ENCODE measurements at regions of chr1 and their contacts with region 1.

Region 1: DNA sequence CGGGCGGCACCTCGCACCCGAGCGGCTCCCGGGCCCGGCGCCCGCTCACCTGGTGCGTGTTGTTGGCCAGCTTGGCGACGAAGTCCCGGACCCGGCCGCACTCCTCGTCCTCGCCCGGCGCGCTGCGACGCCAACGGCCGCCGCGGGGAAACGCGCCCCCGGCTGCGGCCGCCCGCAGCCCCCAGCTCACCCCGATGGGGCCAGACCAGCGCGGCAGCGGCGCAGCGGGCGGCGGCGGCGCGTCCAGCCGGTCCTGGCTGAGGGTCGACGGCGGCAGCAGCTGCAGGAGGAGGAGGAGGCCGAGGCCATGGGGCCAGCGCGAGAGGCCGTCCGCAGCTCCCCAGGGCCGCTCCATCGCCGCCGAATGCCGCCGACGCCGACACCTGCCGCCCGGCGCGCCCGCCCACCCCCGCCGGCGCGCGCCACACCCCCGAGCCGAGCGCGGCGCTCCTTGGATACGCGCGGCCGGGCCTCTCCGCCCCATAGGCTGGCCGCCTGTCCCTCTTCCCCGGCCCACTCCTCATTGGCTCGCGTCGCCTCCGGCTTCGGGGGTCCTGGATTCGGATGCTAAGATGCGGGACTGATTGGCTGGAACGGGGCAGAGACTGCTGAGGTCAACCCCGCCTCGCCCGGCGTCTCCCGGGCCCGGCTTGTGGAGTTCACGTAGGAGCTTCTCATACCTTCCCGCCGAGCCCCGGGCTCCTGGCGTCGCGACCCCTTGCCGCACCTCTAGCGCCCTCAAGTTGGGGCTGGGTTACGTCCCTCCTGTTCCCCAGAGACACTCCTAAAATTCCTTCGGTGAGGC is at the start of gene SORT1:
- DNase-seq: peak; percentile 88 to 90
- ATAC-seq: peak; percentile 93 to 96 (median 94)
- H3K4me3 ChIP-seq: peak within 1 kb of the TSS; percentile 29 to 80 (median 64)
- H3K27ac ChIP-seq: peak within 1 kb of the TSS; percentile 53 to 96 (median 89)
- H3K4me1 ChIP-seq: peaks cover 7 to 73% (median 54%) of the 10 kb centered on the region in 9 donors
- H3K27me3 ChIP-seq: peaks cover 0 to 11% (median 0%) of the 10 kb centered on the region in 7 donors
- CTCF ChIP-seq: peak in 1 of 9 donors; percentile 18
- total RNA-seq, gene SORT1: 105 to 235 (median 132) TPM

Region 2: GRCh38 chr1:109099938-109100773 is 297.6 kb before region 1 on chr1:
- intact Hi-C with region 1: loop called in 1 of 10 experiments (anchors 10 kb)
- DNase-seq: peak; percentile 96 to 98
- ATAC-seq: peak; percentile 97 to 99 (median 99)
- H3K4me3 ChIP-seq: peak overlapping the region; percentile 81 to 100 (median 96)
- H3K27ac ChIP-seq: peak overlapping the region; percentile 94 to 100 (median 98)
- H3K4me1 ChIP-seq: peaks cover 0 to 38% (median 22%) of the 10 kb centered on the region in 9 donors
- H3K27me3 ChIP-seq: no peaks in the 10 kb centered on the region
- CTCF ChIP-seq: peak; percentile 76 to 96 (median 90)

Region 3: DNA sequence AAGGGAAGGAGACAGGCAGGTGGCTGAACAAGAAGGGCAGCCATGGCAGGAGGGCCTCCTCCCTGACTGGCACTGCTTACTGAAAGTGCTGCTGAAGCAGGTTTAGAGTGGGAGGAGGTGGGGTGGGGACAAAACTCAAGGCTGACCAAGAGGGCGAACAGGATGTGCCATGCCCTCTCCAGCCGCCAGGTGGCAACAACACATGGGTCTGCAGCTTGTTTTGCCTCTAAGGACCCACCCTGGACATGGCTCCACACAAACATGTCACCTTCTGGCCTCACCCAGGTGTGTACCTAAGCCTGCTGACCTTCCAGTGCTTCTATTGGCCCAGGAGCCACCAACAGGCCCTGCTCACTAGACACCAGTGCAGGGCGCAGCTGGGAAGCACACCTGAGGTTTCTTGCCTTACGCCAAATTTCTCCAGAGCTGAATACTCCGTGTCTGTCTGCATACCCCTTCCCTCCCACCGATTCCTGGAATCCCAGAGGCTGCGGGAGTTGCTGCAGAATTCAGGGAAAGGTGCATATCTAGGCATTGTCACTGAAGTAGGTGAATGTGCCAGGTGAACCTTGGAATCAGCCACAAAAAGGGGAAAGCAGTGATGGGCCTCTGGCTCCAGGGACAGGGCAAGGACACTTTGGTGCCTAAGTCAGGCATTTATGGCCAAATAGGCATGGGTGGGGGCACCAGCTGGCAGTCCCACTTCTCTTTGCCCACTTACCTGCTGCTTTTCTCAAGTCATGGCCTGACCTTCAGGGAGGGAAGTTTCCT is 120.1 kb before region 1 on chr1:
- intact Hi-C with region 1: loop called (anchors 1 to 5 kb)
- DNase-seq: peak; percentile 78 to 81
- ATAC-seq: peak; percentile 65 to 84 (median 78)
- H3K4me3 ChIP-seq: no peak overlapping the region
- H3K27ac ChIP-seq: no peak overlapping the region
- H3K4me1 ChIP-seq: peaks cover 0 to 29% (median 7%) of the 10 kb centered on the region in 9 donors
- H3K27me3 ChIP-seq: no peaks in the 10 kb centered on the region
- CTCF ChIP-seq: peak; percentile 86 to 96 (median 89)

Region 4: DNA sequence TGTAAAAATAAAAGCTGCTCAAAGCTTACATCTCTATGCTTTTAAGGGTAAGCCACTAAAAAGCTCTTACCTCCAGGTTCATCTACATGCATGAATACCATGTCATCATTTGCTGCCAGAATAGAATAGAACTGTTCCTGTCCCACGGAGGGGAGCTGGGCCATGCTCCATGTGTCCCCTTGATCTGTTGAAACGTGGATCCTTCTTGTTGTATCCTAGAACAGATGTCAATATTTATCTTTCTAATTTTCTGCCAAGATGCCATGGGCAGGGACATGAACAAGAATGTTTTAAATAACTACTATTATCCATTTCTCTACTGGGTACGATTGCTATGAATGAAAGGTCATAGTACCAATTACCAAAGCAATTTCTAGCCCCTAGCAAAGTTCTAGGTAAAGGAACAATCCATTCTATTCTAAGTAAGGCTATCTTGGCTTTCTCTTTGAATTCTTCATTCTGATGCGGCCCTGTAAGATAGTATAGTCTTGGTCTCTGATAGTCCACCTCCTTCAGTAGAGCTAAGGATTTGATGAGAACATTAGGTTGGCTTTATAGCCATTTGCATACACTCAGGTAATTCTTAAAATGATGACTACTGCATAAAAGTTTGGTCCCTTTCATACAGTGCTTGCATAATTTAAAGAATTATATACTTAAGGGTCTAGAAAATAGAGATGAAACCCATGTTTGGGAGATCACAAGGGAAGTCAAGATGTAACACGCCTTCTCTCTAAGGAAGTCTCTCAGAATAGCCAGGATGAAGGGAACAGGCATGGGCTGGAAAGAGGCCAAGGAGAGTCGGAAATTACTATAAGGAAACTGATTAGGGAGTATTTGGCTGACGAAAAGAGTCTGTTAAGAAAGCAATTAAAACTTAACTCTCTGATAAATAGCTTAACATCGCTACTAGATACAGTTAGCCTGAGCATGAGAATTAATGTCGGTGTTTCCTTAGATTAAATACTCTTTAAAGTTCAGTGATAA is 55.5 kb before region 1 on chr1:
- intact Hi-C with region 1: loop called in 2 of 10 experiments (anchors 10 kb)
- DNase-seq: peak in 1 of 2 donors; percentile 36
- ATAC-seq: peak in 2 of 8 donors; percentile 42 to 44
- H3K4me3 ChIP-seq: no peak overlapping the region
- H3K27ac ChIP-seq: peak overlapping the region in 1 of 10 donors; percentile 47
- H3K4me1 ChIP-seq: peaks cover 0 to 21% (median 12%) of the 10 kb centered on the region in 9 donors
- H3K27me3 ChIP-seq: no peaks in the 10 kb centered on the region
- CTCF ChIP-seq: no peak

Region 5: GRCh38 chr1:109361649-109362048 is 36.1 kb before region 1 on chr1:
- intact Hi-C with region 1: loop called in 3 of 10 experiments (anchors 5 kb)
- DNase-seq: no peak
- ATAC-seq: peak in 1 of 8 donors; percentile 66
- H3K4me3 ChIP-seq: no peak overlapping the region
- H3K27ac ChIP-seq: peak overlapping the region in 1 of 10 donors; percentile 28
- H3K4me1 ChIP-seq: peaks cover 0 to 56% (median 18%) of the 10 kb centered on the region in 9 donors
- H3K27me3 ChIP-seq: no peaks in the 10 kb centered on the region
- CTCF ChIP-seq: no peak

Region 6: GRCh38 chr1:109483672-109484518 is 86.2 kb after region 1 on chr1 and contains the start of gene ATXN7L2:
- intact Hi-C with region 1: no loop called
- DNase-seq: peak; percentile 91 to 94
- ATAC-seq: peak; percentile 89 to 96 (median 93)
- H3K4me3 ChIP-seq: peak within 1 kb of the TSS; percentile 33 to 90 (median 82)
- H3K27ac ChIP-seq: peak within 1 kb of the TSS; percentile 96 to 99 (median 98)
- H3K4me1 ChIP-seq: peaks cover 8 to 23% (median 18%) of the 10 kb centered on the region in 9 donors
- H3K27me3 ChIP-seq: peaks cover 0 to 9% (median 0%) of the 10 kb centered on the region in 7 donors
- CTCF ChIP-seq: no peak
- total RNA-seq, gene ATXN7L2: 1.8 to 3.0 (median 2.5) TPM